Caco-2 (cell line): ENCODE measurements at regions of chr19 and their contacts with region 1.

Region 1: GRCh38 chr19:33080761-33081681 is at the start of gene GPATCH1:
- DNase-seq: peak; percentile 92 to 95
- H3K4me3 ChIP-seq: peak within 1 kb of the TSS; percentile 76
- H3K4me3 Mint-ChIP-seq: peak within 1 kb of the TSS; percentile 100
- H3K27ac Mint-ChIP-seq: peak within 1 kb of the TSS; percentile 98
- H3K4me1 ChIP-seq: peaks cover 27% of the 10 kb centered on the region
- H3K4me1 Mint-ChIP-seq: peaks cover 29% of the 10 kb centered on the region
- H3K27me3 ChIP-seq: no peaks in the 10 kb centered on the region
- H3K27me3 Mint-ChIP-seq: no peaks in the 10 kb centered on the region
- CTCF ChIP-seq: no peak
- total RNA-seq, gene GPATCH1: 16.1 and 17.1 TPM in 2 replicates

Region 2: DNA sequence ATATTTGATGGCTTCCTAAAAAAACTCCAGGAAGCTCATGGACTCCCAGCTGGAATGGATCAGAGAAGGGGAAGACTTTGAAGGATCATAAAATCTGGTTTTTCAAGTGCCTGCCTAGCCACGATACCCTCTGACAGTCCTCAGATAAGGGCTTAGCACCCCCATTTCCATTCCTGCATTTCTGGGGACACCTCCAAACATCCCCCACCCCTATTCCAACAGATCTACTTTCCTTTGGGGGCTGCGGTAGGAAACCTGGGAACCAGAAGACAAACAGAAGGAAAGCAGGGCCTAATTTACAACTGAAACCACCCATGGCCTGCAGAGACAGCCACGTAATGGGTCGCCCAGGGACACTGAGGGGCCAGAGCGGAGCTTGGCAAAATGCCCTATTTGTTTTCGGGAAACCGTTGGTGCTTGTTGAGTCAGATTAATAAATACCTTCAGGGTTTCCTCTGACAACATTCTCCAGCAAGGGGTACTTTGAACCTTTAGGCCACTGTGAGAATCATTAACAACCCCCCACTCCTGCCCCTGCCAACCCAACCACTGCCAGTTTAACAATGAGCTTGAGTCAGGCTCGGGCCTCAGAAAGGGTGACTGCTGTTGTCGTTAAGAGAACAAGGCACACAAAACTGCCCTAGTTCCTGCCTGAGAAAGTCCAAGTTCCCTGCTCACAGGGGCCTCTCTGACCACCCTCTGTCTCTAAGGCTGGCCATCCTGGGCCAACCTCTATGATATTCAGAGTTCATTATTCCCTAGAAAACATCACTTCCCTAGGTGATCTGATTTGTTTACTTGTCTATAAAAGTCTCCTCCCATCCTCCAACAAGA is 39.8 kb before region 1 on chr19:
- CTCF ChIA-PET with region 1: no interaction called
- POLR2A ChIA-PET with region 1: no interaction called
- intact Hi-C with region 1: no loop called
- DNase-seq: peak; percentile 74 to 86
- H3K4me3 ChIP-seq: no peak overlapping the region
- H3K4me3 Mint-ChIP-seq: peak overlapping the region; percentile 51
- H3K27ac Mint-ChIP-seq: peak overlapping the region; percentile 85
- H3K4me1 ChIP-seq: peaks cover 40% of the 10 kb centered on the region
- H3K4me1 Mint-ChIP-seq: peaks cover 36% of the 10 kb centered on the region
- H3K27me3 ChIP-seq: no peaks in the 10 kb centered on the region
- H3K27me3 Mint-ChIP-seq: no peaks in the 10 kb centered on the region
- CTCF ChIP-seq: no peak

Region 3: GRCh38 chr19:33052352-33052972 is 28.6 kb before region 1 on chr19:
- CTCF ChIA-PET with region 1: interaction called, 3 read pairs
- POLR2A ChIA-PET with region 1: interaction called, 11 read pairs
- intact Hi-C with region 1: loop called (anchors 1 kb)
- DNase-seq: peak in 1 of 2 experiments; percentile 55
- H3K4me3 ChIP-seq: no peak overlapping the region
- H3K4me3 Mint-ChIP-seq: no peak overlapping the region
- H3K27ac Mint-ChIP-seq: peak overlapping the region; percentile 98
- H3K4me1 ChIP-seq: peaks cover 52% of the 10 kb centered on the region
- H3K4me1 Mint-ChIP-seq: peaks cover 38% of the 10 kb centered on the region
- H3K27me3 ChIP-seq: no peaks in the 10 kb centered on the region
- H3K27me3 Mint-ChIP-seq: no peaks in the 10 kb centered on the region
- CTCF ChIP-seq: no peak

Region 4: DNA sequence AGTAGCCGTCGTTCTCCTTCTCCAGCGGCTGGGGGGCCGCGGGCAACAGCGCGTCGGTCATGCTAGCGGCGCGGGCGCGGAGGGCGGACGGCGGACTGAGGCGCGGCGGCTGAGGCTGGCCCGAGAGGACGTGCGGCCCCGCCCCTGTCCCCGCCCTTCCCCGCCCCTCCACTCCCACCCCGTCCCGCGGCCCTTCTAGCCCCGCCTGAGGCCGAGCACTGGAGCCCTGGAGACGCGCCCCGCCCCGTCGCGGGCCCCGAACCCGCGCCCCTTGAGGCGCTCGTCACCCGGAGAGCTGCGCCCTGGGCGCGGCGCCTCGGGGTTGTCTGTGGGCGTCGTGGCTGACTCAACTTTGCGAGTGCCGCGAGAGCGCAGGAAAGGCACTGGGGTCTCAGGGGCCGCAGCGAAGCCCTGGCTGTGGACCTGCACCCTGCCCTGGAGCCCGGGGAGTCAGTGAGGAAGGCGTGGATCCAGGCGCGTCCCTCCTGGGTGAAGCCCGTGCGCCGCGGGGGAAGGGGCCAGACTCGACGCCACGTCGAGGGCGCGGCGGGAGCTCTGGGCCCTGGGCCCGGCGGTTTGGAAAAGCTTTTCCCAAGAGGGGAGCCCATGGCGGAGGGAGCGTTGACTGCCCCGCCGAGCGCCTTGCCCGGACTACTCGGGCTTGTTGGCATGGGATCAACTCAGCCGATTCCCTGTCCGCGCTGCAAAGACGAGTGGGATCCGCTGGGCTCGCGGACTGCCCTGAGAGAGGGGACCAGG is 16.1 kb before region 1 on chr19 and contains the start of gene RHPN2:
- CTCF ChIA-PET with region 1: no interaction called
- POLR2A ChIA-PET with region 1: interaction called, 11 read pairs
- intact Hi-C with region 1: loop called (anchors 1 kb)
- DNase-seq: peak; percentile 85 to 87
- H3K4me3 ChIP-seq: peak within 1 kb of the TSS; percentile 98
- H3K4me3 Mint-ChIP-seq: peak within 1 kb of the TSS; percentile 92
- H3K27ac Mint-ChIP-seq: peak within 1 kb of the TSS; percentile 90
- H3K4me1 ChIP-seq: peaks cover 42% of the 10 kb centered on the region
- H3K4me1 Mint-ChIP-seq: peaks cover 18% of the 10 kb centered on the region
- H3K27me3 ChIP-seq: no peaks in the 10 kb centered on the region
- H3K27me3 Mint-ChIP-seq: no peaks in the 10 kb centered on the region
- CTCF ChIP-seq: no peak
- total RNA-seq, gene RHPN2: 69.5 and 78.5 TPM in 2 replicates

Region 5: GRCh38 chr19:33273881-33274682 is 193.1 kb after region 1 on chr19:
- CTCF ChIA-PET with region 1: no interaction called
- POLR2A ChIA-PET with region 1: no interaction called
- intact Hi-C with region 1: no loop called
- DNase-seq: peak; percentile 54 to 65
- H3K4me3 ChIP-seq: no peak overlapping the region
- H3K4me3 Mint-ChIP-seq: no peak overlapping the region
- H3K27ac Mint-ChIP-seq: peak overlapping the region; percentile 60
- H3K4me1 ChIP-seq: peaks cover 60% of the 10 kb centered on the region
- H3K4me1 Mint-ChIP-seq: peaks cover 28% of the 10 kb centered on the region
- H3K27me3 ChIP-seq: no peaks in the 10 kb centered on the region
- H3K27me3 Mint-ChIP-seq: no peaks in the 10 kb centered on the region
- CTCF ChIP-seq: no peak